CD4-positive, alpha-beta T cell (primary cell): ENCODE measurements at regions of chr9 and their contacts with region 1.

Region 1: GRCh38 chr9:88494983-88495721 is 39.8 kb upstream of the NXNL2 start:
- DNase-seq: no peak
- ATAC-seq: no peak
- H3K4me3 ChIP-seq: no peak overlapping the region
- H3K4me3 Mint-ChIP-seq: no peak overlapping the region
- H3K27ac ChIP-seq: no peak overlapping the region
- H3K27ac Mint-ChIP-seq: no peak overlapping the region
- H3K4me1 ChIP-seq: no peaks in the 10 kb centered on the region
- H3K4me1 Mint-ChIP-seq: no peaks in the 10 kb centered on the region
- H3K27me3 ChIP-seq: no peaks in the 10 kb centered on the region
- H3K27me3 Mint-ChIP-seq: no peaks in the 10 kb centered on the region
- CTCF ChIP-seq: no peak

Region 2: DNA sequence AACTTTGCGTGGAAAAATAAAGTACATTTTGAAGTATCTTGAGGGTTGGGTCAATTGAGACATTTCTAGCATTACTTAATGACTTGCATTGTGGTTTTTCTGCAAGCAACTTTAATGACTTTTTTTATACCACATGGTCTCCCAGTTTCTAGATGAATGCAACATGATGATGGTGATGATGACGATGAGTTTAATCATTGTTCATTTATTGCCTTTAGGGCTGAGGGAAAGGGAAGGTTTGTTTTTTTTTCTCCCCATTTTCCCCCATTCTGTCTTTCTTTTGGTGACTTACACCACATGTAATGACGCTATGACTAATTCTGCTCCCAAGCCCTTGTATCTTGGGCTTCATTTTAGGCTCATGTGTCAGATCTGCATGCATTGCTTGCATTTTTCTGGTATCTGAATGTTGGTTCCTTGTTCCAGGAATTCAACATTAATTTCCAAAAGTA is 17.8 kb before region 1 on chr9:
- CTCF ChIA-PET with region 1: no interaction called
- POLR2A ChIA-PET with region 1: no interaction called
- intact Hi-C with region 1: loop called in 1 of 2 experiments (anchors 1 kb)
- DNase-seq: no peak
- ATAC-seq: no peak
- H3K4me3 ChIP-seq: no peak overlapping the region
- H3K4me3 Mint-ChIP-seq: no peak overlapping the region
- H3K27ac ChIP-seq: no peak overlapping the region
- H3K27ac Mint-ChIP-seq: no peak overlapping the region
- H3K4me1 ChIP-seq: no peaks in the 10 kb centered on the region
- H3K4me1 Mint-ChIP-seq: no peaks in the 10 kb centered on the region
- H3K27me3 ChIP-seq: no peaks in the 10 kb centered on the region
- H3K27me3 Mint-ChIP-seq: no peaks in the 10 kb centered on the region
- CTCF ChIP-seq: no peak

Region 3: GRCh38 chr9:90204128-90204831 is 1709.1 kb after region 1 on chr9:
- CTCF ChIA-PET with region 1: no interaction called
- POLR2A ChIA-PET with region 1: no interaction called
- intact Hi-C with region 1: no loop called
- DNase-seq: no peak
- ATAC-seq: no peak
- H3K4me3 ChIP-seq: no peak overlapping the region
- H3K4me3 Mint-ChIP-seq: no peak overlapping the region
- H3K27ac ChIP-seq: no peak overlapping the region
- H3K27ac Mint-ChIP-seq: no peak overlapping the region
- H3K4me1 ChIP-seq: no peaks in the 10 kb centered on the region
- H3K4me1 Mint-ChIP-seq: no peaks in the 10 kb centered on the region
- H3K27me3 ChIP-seq: no peaks in the 10 kb centered on the region
- H3K27me3 Mint-ChIP-seq: peaks cover 12% of the 10 kb centered on the region
- CTCF ChIP-seq: no peak